IMR-90 (cell line): ENCODE measurements at regions of chr2 and their contacts with region 1.

Region 1: GRCh38 chr2:201231781-201232466 is 28.4 kb upstream of the CASP8 start:
- DNase-seq: peak; percentile 87
- ATAC-seq: peak; percentile 74
- H3K4me3 ChIP-seq: no peak overlapping the region
- H3K27ac ChIP-seq: peak overlapping the region; percentile 47; the same call in 1 of the 2 replicates
- H3K4me1 ChIP-seq: peaks cover 6% of the 10 kb centered on the region; the same call in 1 of the 2 replicates
- H3K27me3 ChIP-seq: no peaks in the 10 kb centered on the region
- CTCF ChIP-seq: peak; percentile 83
- POLR2A ChIP-seq: no peak
- RAD21 ChIP-seq: peak; percentile 75

Region 2: DNA sequence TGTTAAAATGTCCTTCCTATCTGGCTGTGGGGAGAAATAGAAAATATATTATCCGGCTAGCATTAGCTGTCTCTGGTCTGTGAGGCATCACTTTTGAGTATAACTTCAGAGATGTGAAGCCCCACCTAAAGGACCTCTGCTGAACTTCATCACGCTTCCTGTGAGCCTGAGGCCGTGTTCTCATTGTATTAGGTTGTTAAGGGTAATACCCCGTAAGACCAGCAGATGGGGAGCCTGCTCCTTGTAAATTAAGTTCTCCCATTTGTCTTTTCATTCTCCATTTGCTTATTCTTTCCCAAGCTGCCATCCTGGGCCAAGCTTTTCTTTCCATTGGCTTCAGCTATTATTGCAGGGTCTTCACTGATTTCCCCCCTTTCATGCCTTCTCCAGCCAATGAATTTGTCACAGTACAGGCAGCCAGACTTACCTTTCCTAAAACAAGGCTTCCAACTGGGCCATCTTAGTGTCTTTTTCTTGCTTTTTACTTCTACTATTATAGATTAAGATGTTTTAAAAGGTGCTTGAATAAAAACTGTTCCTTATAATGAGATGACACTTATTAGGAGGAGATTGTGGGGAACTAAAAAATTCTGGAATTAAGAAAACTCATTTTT is 330.4 kb before region 1 on chr2:
- CTCF ChIA-PET with region 1: interaction called, 7 read pairs
- POLR2A ChIA-PET with region 1: no interaction called
- dilution Hi-C with region 1: no loop called
- in situ Hi-C with region 1: no loop called
- intact Hi-C with region 1: loop called (anchors 1 kb)
- DNase-seq: peak; percentile 90
- ATAC-seq: peak; percentile 98
- H3K4me3 ChIP-seq: no peak overlapping the region
- H3K27ac ChIP-seq: no peak overlapping the region
- H3K4me1 ChIP-seq: no peaks in the 10 kb centered on the region
- H3K27me3 ChIP-seq: no peaks in the 10 kb centered on the region
- CTCF ChIP-seq: peak; percentile 93
- POLR2A ChIP-seq: no peak
- RAD21 ChIP-seq: peak; percentile 83

Region 3: DNA sequence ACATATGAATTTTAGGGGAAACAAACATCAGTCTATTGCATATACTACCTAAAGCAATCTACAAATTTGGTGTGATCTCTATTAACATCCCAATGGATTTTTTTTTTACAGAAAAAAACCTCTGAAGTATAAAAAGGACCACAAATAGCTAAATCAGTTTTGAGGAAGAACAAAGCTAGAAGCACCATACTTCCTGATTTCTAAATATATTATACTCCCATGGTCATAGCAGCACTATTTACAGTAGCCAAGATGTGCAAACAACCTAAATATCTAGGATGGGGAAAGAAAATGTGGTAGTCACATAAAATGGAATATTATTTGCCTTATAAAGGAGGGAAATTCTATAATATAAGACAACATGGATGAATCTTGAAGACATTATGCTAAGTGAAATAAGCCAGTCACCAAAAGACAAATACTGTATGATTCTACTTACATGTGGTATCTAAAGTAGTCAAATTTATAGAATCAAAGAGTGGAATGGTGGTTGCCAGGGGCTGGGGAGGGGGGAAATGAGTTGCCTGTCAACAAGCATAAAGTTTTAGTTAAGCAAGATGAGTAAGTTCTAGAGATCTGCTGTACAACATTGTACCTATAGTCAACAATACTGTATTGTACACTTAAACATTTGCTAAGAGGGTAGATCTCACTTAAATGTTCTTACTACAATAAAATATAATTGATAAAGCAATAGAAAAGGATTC is 10.8 kb after region 1 on chr2:
- CTCF ChIA-PET with region 1: no interaction called
- POLR2A ChIA-PET with region 1: no interaction called
- dilution Hi-C with region 1: no loop called
- in situ Hi-C with region 1: no loop called
- intact Hi-C with region 1: no loop called
- DNase-seq: no peak
- ATAC-seq: no peak
- H3K4me3 ChIP-seq: no peak overlapping the region
- H3K27ac ChIP-seq: no peak overlapping the region
- H3K4me1 ChIP-seq: peaks cover 2% of the 10 kb centered on the region
- H3K27me3 ChIP-seq: no peaks in the 10 kb centered on the region
- CTCF ChIP-seq: no peak
- POLR2A ChIP-seq: no peak
- RAD21 ChIP-seq: no peak

Region 4: GRCh38 chr2:201257956-201258665 is 26.2 kb after region 1 on chr2:
- CTCF ChIA-PET with region 1: interaction called, 4 read pairs
- POLR2A ChIA-PET with region 1: no interaction called
- dilution Hi-C with region 1: no loop called
- in situ Hi-C with region 1: no loop called
- intact Hi-C with region 1: loop called (anchors 1 kb)
- DNase-seq: peak; percentile 79
- ATAC-seq: peak; percentile 76
- H3K4me3 ChIP-seq: peak overlapping the region; percentile 67
- H3K27ac ChIP-seq: peak overlapping the region; percentile 88
- H3K4me1 ChIP-seq: peaks cover 12% of the 10 kb centered on the region
- H3K27me3 ChIP-seq: no peaks in the 10 kb centered on the region
- CTCF ChIP-seq: no peak; the same call in 1 of the 2 replicates
- POLR2A ChIP-seq: no peak; the same call in 1 of the 2 replicates
- RAD21 ChIP-seq: peak; percentile 16; the same call in 1 of the 2 replicates

Region 5: DNA sequence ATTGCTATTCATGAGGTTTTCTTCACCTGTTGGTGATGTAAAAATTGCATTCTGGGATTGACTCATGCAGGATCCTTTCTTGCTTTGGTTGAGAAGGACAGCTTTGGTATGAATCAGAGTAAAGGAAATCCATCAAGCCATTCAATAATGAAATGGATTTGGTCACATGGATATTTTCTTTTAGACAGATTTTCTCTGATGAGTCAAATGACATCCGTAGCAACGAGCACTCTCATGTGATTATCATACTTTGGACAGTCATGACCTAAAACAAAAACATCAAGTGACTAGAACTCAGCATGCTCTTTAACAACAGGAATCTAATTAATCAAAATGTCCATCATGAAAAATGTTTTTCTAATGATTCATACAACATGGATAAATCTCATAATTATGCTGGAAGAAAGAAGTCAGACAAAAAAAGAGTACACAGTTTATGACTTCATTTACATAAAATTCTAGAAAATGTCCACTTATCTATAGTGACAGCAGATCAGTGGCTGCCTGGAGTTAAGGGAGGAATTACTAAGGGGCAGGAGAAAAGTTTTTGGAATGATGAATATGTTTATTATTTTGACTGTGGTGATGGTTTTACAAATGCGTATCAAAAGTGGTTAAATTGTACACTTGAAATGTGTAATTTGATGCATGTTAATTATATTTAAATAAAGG is 188.7 kb after region 1 on chr2:
- CTCF ChIA-PET with region 1: no interaction called
- POLR2A ChIA-PET with region 1: no interaction called
- dilution Hi-C with region 1: no loop called
- in situ Hi-C with region 1: no loop called
- intact Hi-C with region 1: no loop called
- DNase-seq: peak; percentile 80
- ATAC-seq: peak; percentile 67
- H3K4me3 ChIP-seq: no peak overlapping the region
- H3K27ac ChIP-seq: no peak overlapping the region
- H3K4me1 ChIP-seq: peaks cover 11% of the 10 kb centered on the region
- H3K27me3 ChIP-seq: no peaks in the 10 kb centered on the region
- CTCF ChIP-seq: no peak
- POLR2A ChIP-seq: no peak
- RAD21 ChIP-seq: no peak

Region 6: DNA sequence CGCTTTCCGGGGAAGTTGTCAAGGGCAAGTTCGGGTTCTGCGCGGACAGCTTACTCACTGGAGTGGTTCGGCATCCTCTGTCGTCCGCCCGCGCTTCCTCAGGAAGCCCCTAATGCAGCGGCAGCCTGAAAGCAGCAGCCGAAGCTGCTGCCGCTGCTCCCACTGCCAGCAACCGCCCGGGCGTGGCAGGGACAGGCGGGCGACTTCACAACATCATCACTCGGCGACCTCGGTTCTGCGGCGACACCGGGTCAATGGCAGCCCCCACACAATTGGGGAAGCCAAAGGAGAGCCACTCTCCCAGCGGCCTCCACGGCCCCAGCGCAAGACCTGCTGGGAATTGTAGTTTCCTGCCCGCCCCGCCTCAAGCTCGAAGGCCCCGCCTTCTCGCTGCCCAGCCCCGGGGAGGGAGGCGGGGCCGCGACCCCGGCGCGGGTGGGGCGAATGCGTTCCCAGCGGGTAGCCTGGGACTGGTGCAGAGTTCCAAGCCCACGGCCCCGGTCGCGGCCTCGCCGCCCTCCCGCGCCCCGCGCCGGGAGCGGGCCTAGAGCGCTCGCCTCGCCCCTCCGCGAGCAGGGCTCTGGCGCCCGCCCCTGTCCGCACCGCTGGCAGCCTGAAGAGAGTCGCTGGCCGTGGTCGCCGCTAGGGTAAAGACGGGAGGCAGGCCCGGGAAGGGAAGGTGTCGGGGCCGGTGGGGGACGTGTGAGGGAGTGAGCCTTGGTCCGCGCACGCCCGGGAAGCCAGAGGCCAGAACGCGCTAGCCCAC is 219.6 kb after region 1 on chr2 and contains the starts of genes STRADB and TRAK2:
- CTCF ChIA-PET with region 1: interaction called, 5 read pairs
- POLR2A ChIA-PET with region 1: no interaction called
- dilution Hi-C with region 1: no loop called
- in situ Hi-C with region 1: no loop called
- intact Hi-C with region 1: loop called (anchors 5 kb)
- DNase-seq: peak; percentile 92
- ATAC-seq: peak; percentile 97
- H3K4me3 ChIP-seq: peak within 1 kb of the TSS; percentile 82
- H3K27ac ChIP-seq: peak within 1 kb of the TSS; percentile 80
- H3K4me1 ChIP-seq: peaks cover 2% of the 10 kb centered on the region; the same call in 1 of the 2 replicates
- H3K27me3 ChIP-seq: no peaks in the 10 kb centered on the region
- CTCF ChIP-seq: peak; percentile 30; the same call in 1 of the 2 replicates
- POLR2A ChIP-seq: peak; percentile 70; the same call in 1 of the 2 replicates
- RAD21 ChIP-seq: no peak
- total RNA-seq, gene STRADB: 31.5 and 32.5 TPM in 2 replicates
- total RNA-seq, gene TRAK2: 48.9 and 65.4 TPM in 2 replicates

Region 7: DNA sequence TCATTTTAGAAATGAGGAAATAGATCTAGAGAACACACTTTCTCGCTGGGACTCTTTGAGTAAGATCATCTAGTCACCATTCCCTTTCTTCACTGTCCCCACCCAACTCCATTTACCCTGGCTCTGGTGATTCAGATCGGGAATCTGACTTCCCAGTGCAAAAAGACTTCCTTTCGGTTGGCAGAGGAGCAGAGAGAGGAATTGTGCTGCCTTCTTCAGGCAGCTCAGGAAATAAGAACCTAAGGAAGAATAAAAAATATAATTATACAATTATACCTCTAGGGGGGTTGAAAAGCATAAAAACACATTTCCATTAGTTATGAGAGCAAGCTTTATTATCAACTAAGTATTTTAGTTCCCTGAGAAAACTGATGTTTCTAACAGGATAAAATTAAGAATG is 475.8 kb after region 1 on chr2:
- CTCF ChIA-PET with region 1: no interaction called
- POLR2A ChIA-PET with region 1: no interaction called
- dilution Hi-C with region 1: no loop called
- in situ Hi-C with region 1: no loop called
- intact Hi-C with region 1: loop called (anchors 10 kb)
- DNase-seq: peak; percentile 66
- ATAC-seq: peak; percentile 71
- H3K4me3 ChIP-seq: no peak overlapping the region
- H3K27ac ChIP-seq: no peak overlapping the region
- H3K4me1 ChIP-seq: no peaks in the 10 kb centered on the region
- H3K27me3 ChIP-seq: no peaks in the 10 kb centered on the region
- CTCF ChIP-seq: peak; percentile 52
- POLR2A ChIP-seq: no peak
- RAD21 ChIP-seq: peak; percentile 62